ENCODE measurements at regions of chr5 and their contacts with region 1.

Region 1: DNA sequence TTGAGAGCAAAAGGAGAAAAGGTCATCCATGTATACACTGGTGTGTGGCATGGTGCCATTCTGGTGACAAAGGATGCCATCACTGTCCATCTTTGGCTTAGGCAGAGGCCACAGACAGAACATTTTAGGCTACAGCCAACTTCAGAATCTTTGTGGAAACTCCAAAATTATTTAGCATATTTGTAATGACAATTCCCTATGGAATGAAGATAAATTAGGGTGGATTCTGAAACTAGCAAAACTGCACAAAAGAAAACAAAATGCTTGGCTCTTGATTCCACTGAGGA is 92.5 kb downstream of the FBXW11 start:
- DNase-seq: no peak
- ATAC-seq: no peak
- H3K4me3 Mint-ChIP-seq: no peak overlapping the region
- H3K27ac Mint-ChIP-seq: peak overlapping the region; percentile 36
- H3K4me1 Mint-ChIP-seq: peaks cover 71% of the 10 kb centered on the region
- H3K27me3 Mint-ChIP-seq: no peaks in the 10 kb centered on the region
- CTCF ChIP-seq: no peak

Region 2: GRCh38 chr5:171858303-171858702 is 55.6 kb before region 1 on chr5:
- CTCF ChIA-PET with region 1: no interaction called
- POLR2A ChIA-PET with region 1: no interaction called
- intact Hi-C with region 1: no loop called
- DNase-seq: no peak
- ATAC-seq: no peak
- H3K4me3 Mint-ChIP-seq: no peak overlapping the region
- H3K27ac Mint-ChIP-seq: no peak overlapping the region
- H3K4me1 Mint-ChIP-seq: peaks cover 9% of the 10 kb centered on the region
- H3K27me3 Mint-ChIP-seq: no peaks in the 10 kb centered on the region
- CTCF ChIP-seq: no peak

Region 3: GRCh38 chr5:172035039-172035438 is 121.1 kb after region 1 on chr5:
- CTCF ChIA-PET with region 1: interaction called, 116 read pairs
- POLR2A ChIA-PET with region 1: interaction called, 4 read pairs
- intact Hi-C with region 1: loop called (anchors 1 kb)
- DNase-seq: no peak
- ATAC-seq: peak; percentile 62
- H3K4me3 Mint-ChIP-seq: no peak overlapping the region
- H3K27ac Mint-ChIP-seq: peak overlapping the region; percentile 18
- H3K4me1 Mint-ChIP-seq: peaks cover 16% of the 10 kb centered on the region
- H3K27me3 Mint-ChIP-seq: no peaks in the 10 kb centered on the region
- CTCF ChIP-seq: no peak

Region 4: GRCh38 chr5:172044631-172045314 is 130.8 kb after region 1 on chr5:
- CTCF ChIA-PET with region 1: interaction called, 116 read pairs
- POLR2A ChIA-PET with region 1: interaction called, 4 read pairs
- intact Hi-C with region 1: loop called (anchors 1 kb)
- DNase-seq: no peak
- ATAC-seq: peak; percentile 40
- H3K4me3 Mint-ChIP-seq: no peak overlapping the region
- H3K27ac Mint-ChIP-seq: peak overlapping the region; percentile 73
- H3K4me1 Mint-ChIP-seq: peaks cover 10% of the 10 kb centered on the region
- H3K27me3 Mint-ChIP-seq: no peaks in the 10 kb centered on the region
- CTCF ChIP-seq: no peak

Region 5: GRCh38 chr5:172059661-172060100 is 145.8 kb after region 1 on chr5:
- CTCF ChIA-PET with region 1: interaction called, 46 read pairs
- POLR2A ChIA-PET with region 1: interaction called, 4 read pairs
- intact Hi-C with region 1: loop called (anchors 1 kb)
- DNase-seq: no peak
- ATAC-seq: no peak
- H3K4me3 Mint-ChIP-seq: no peak overlapping the region
- H3K27ac Mint-ChIP-seq: no peak overlapping the region
- H3K4me1 Mint-ChIP-seq: no peaks in the 10 kb centered on the region
- H3K27me3 Mint-ChIP-seq: no peaks in the 10 kb centered on the region
- CTCF ChIP-seq: no peak

Region 6: GRCh38 chr5:173228639-173229381 is 1314.9 kb after region 1 on chr5:
- CTCF ChIA-PET with region 1: no interaction called
- POLR2A ChIA-PET with region 1: no interaction called
- intact Hi-C with region 1: no loop called
- DNase-seq: no peak
- ATAC-seq: no peak
- H3K4me3 Mint-ChIP-seq: no peak overlapping the region
- H3K27ac Mint-ChIP-seq: no peak overlapping the region
- H3K4me1 Mint-ChIP-seq: peaks cover 15% of the 10 kb centered on the region
- H3K27me3 Mint-ChIP-seq: peaks cover 58% of the 10 kb centered on the region
- CTCF ChIP-seq: no peak

Measured in activated B cell treated with CpG ODN at 0.5 μM for 24 hours (primary cell).